HepG2 (cell line): ENCODE measurements at regions of chr12 and their contacts with region 1.

Region 1: GRCh38 chr12:97716356-97716755 is 253.8 kb downstream of the RMST start:
- DNase-seq: peak; percentile 9
- ATAC-seq: peak; percentile 67
- H3K4me3 ChIP-seq: no peak overlapping the region
- H3K27ac ChIP-seq: no peak overlapping the region
- H3K4me1 ChIP-seq: no peaks in the 10 kb centered on the region
- H3K27me3 ChIP-seq: no peaks in the 10 kb centered on the region
- CTCF ChIP-seq: peak; percentile 30; the same call in 1 of the 2 replicates
- EP300 ChIP-seq: no peak
- POLR2A ChIP-seq: no peak
- RAD21 ChIP-seq: no peak

Region 2: DNA sequence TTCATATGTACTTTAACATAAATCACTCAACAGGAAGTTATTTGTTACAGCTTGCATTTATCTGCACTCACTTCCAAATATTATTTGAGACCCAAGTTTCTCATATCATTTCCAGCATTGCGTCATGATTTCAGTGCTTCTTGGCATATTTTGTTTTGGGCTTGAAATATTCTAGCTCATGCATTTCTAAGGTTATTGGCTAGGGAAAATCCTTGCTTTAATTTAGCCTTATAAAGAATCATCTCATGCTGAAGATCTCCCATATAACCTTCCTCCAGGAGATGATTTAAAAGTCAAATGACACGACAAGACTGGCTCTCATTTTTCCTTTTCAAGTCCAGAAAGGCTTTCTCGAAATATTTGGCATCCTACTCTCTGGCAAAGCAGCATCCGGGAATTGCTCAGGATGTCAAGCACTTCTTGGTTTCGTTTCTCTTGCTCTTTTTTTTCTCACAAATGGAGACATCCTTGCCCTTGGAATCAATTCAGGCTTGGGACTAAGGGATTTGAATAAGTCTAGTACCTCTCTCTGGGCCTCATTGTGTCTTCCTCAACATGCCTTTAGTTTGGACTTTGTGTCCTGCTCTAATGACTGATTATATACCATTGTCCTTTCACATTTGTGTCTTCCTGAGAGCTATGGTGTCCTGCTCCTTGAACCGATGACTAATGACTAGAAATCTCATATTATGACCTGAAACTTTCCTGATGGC is 41.3 kb after region 1 on chr12:
- CTCF ChIA-PET with region 1: no interaction called
- POLR2A ChIA-PET with region 1: no interaction called
- in situ Hi-C with region 1: no loop called
- intact Hi-C with region 1: no loop called
- DNase-seq: peak; percentile 3
- ATAC-seq: no peak
- H3K4me3 ChIP-seq: no peak overlapping the region
- H3K27ac ChIP-seq: no peak overlapping the region
- H3K4me1 ChIP-seq: peaks cover 6% of the 10 kb centered on the region; the same call in 1 of the 2 replicates
- H3K27me3 ChIP-seq: no peaks in the 10 kb centered on the region
- CTCF ChIP-seq: no peak
- EP300 ChIP-seq: no peak
- POLR2A ChIP-seq: no peak
- RAD21 ChIP-seq: no peak

Region 3: DNA sequence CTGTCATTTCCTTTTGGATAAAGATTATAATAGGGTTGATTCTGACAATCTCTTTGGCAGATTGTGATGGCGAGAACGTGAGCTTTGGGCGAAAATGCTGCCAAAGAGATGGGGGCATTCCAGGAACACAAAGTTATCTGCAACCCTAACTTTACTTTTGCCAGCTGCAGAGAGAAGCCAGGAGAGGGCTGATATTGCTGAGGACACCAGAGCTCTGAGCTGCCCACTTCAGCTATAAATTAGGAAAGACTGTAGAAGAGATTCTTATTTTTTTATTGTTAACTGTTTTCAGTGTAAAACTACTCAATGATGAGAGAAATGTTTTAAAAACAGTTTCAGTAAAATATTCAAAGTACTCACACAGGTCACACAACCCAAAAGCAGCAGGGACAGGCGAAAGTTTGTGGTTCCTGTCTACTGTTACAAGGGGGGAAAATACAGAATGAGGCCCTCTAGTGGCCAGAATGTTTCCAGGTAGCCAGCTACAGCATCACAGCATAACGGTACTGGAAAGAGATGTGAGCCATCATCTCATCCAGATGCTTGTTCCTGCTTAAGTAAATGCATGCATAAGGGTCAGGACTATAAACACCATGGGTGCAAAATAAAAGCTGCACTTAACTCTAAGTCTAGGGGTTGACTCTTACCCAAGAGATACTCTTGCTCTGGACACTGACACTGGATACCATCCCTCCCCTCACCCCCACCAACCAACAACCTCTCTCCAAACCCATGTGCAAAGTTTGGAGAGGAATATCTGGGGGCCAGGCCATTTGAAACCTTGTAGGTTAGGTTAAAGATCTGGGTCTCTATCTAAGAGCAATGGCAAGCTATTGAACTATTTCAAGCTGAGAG is 244.6 kb after region 1 on chr12:
- CTCF ChIA-PET with region 1: no interaction called
- POLR2A ChIA-PET with region 1: no interaction called
- in situ Hi-C with region 1: no loop called
- intact Hi-C with region 1: loop called (anchors 2 kb)
- DNase-seq: peak; percentile 14
- ATAC-seq: peak; percentile 89
- H3K4me3 ChIP-seq: no peak overlapping the region
- H3K27ac ChIP-seq: no peak overlapping the region
- H3K4me1 ChIP-seq: no peaks in the 10 kb centered on the region
- H3K27me3 ChIP-seq: no peaks in the 10 kb centered on the region
- CTCF ChIP-seq: peak; percentile 59
- EP300 ChIP-seq: no peak
- POLR2A ChIP-seq: no peak
- RAD21 ChIP-seq: peak; percentile 15; the same call in 1 of the 2 replicates

Region 4: GRCh38 chr12:98002712-98003493 is 286.5 kb after region 1 on chr12:
- CTCF ChIA-PET with region 1: interaction called, 3 read pairs
- POLR2A ChIA-PET with region 1: no interaction called
- in situ Hi-C with region 1: no loop called
- intact Hi-C with region 1: loop called (anchors 5 kb)
- DNase-seq: peak; percentile 36
- ATAC-seq: peak; percentile 64
- H3K4me3 ChIP-seq: no peak overlapping the region
- H3K27ac ChIP-seq: no peak overlapping the region
- H3K4me1 ChIP-seq: no peaks in the 10 kb centered on the region
- H3K27me3 ChIP-seq: no peaks in the 10 kb centered on the region
- CTCF ChIP-seq: peak; percentile 74
- EP300 ChIP-seq: no peak
- POLR2A ChIP-seq: no peak
- RAD21 ChIP-seq: no peak; the same call in 1 of the 2 replicates